ENCODE measurements at regions of chr15 and their contacts with region 1.

Region 1: DNA sequence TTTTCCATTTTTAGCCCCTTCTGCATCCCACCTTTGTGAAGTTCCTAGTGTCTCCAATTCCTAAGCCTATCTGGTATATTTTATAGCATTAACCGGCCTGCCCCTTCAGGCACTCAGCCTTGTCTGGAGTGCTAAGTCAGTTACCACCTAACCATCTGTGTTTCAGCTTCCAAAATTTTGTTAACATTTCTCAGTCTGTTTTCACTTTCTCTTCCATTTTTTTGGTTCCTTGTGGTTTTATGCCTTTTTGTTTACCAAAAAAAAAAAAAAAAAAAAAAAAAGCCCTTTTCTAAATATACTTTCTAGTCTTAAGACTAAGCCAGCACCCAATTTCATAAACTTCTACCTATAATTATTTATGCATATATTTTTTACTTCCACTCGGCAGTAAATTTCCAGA is 92.4 kb downstream of the CSNK1G1 start:
- DNase-seq: no peak
- ATAC-seq: no peak
- H3K4me3 Mint-ChIP-seq: no peak overlapping the region
- H3K27ac Mint-ChIP-seq: no peak overlapping the region
- H3K4me1 Mint-ChIP-seq: peaks cover 41% of the 10 kb centered on the region
- H3K27me3 Mint-ChIP-seq: no peaks in the 10 kb centered on the region

Region 2: DNA sequence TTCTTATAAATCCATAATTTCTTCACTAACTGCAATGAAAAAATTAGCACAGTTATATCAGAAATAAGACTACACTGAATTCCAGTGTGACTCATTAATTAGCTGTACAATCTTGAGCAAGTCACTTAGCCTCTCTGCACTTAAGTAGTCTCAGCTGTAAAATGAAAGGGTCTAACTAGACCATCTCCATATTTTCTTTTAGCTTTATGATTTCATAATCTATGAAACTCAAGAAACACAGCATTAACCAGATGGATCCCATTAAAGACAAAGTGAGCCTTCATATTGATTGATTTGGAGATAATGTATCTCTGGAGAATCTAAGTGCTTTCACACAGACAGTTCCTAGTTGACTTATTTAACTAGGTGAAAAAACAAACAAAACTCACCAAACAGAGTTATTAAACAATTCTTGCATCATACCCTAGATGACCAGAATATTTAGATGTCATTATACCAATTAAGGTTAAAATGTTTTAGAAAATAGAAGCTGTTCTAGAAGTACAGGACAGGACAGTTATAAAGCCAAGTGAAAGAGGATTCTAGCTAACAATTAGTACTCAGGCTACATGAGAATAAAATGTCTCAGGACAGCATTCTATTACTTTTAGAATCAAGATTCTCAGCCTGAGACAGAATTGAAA is 81.2 kb after region 1 on chr15:
- CTCF ChIA-PET with region 1: no interaction called
- POLR2A ChIA-PET with region 1: no interaction called
- intact Hi-C with region 1: loop called in 1 of 2 experiments (anchors 5 kb)
- DNase-seq: no peak
- ATAC-seq: no peak
- H3K4me3 Mint-ChIP-seq: no peak overlapping the region
- H3K27ac Mint-ChIP-seq: no peak overlapping the region
- H3K4me1 Mint-ChIP-seq: peaks cover 11% of the 10 kb centered on the region
- H3K27me3 Mint-ChIP-seq: no peaks in the 10 kb centered on the region

Region 3: GRCh38 chr15:64596701-64597476 is 333.3 kb after region 1 on chr15:
- CTCF ChIA-PET with region 1: no interaction called
- POLR2A ChIA-PET with region 1: no interaction called
- intact Hi-C with region 1: no loop called
- DNase-seq: peak; percentile 37
- ATAC-seq: peak; percentile 78
- H3K4me3 Mint-ChIP-seq: peak overlapping the region; percentile 66
- H3K27ac Mint-ChIP-seq: peak overlapping the region; percentile 91
- H3K4me1 Mint-ChIP-seq: peaks cover 54% of the 10 kb centered on the region
- H3K27me3 Mint-ChIP-seq: no peaks in the 10 kb centered on the region

Measured in activated CD4-positive, alpha-beta T cell treated with anti-CD3 and anti-CD28 coated beads for 36 hours (primary cell).